Ascending aorta (tissue), 2 donors: ENCODE measurements at regions of chr5 and their contacts with region 1.

Region 1: DNA sequence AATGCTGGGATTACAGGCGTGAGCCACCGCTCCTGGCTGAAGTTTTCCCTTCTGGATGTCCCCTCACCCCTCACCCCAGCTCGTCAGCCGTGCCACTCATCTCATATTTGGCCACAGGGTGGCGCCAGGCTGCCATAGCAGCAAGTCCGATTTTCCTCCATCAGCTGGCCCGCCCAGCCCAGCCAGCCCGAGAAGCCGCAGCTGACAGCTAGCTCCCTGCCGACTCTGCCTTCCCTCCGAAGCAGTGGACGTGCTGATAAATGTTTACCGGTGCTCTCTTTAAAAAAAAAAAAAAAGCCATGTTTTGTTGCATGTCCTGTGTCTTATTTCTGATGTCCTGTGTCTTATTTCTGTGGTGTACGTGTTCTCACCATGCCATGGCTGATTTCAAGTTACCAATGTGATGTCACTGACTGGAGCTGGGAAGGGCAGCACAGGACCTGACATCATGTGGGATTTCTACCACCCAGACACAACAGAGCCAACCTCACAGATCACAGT is 58.3 kb downstream of the PFDN1 start:
- DNase-seq: peak; percentile 58 to 94
- H3K4me3 ChIP-seq: no peak overlapping the region
- H3K27ac ChIP-seq: no peak overlapping the region
- H3K4me1 ChIP-seq: peaks cover 10 to 24% of the 10 kb centered on the region in 2 donors
- H3K27me3 ChIP-seq: no peaks in the 10 kb centered on the region
- CTCF ChIP-seq: peak; percentile 89 to 93 (median 90)

Region 2: DNA sequence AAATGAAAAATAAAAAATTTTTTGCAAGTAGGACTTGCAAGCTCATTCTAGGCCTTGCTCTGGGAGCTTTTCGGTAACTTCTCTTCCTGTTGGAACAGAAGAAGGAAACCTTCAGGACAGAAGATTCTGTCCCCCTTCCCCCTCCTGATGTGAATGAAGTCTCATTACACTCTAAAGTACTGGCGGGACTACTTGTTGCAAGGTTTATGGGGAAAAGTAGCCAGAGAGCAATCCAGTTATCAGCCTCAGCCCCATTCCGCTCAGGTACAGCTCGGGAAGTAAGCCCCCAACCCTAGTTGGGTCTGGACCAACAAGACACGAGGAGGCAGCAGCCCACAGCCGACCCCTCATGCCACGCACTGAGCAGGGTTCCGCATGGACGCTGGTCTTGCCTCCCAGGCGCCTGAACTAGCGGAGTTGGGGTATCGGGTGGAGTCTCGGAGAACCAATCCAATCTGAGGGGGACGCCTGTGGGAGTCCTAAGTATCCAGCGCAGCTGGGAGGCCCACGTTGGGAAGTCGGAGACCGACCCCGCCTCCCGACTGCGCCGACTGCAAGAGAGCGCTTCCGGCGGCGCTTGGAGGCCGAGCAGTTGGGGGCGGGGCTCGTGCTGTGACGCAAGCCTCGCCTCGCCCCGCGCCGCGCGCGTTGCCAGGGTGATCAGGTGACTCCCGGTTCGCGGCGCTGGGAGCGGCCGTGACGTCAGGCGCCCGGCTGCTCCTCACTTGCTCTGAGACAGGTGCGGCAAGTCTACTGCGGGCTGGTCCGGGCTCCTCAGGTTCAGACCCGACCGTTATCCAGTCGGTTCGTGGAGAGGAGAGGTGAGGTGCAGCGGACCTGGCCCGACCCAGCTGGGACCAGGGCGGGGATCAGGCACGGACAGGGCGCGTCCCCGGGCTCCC is 69.9 kb before region 1 on chr5 and contains the start of gene CYSTM1:
- intact Hi-C with region 1: loop called (anchors 5 kb)
- DNase-seq: peak; percentile 86 to 98
- H3K4me3 ChIP-seq: peak within 1 kb of the TSS; percentile 93
- H3K27ac ChIP-seq: peak within 1 kb of the TSS; percentile 96 to 98
- H3K4me1 ChIP-seq: peaks cover 4 to 28% of the 10 kb centered on the region in 2 donors
- H3K27me3 ChIP-seq: no peaks in the 10 kb centered on the region
- CTCF ChIP-seq: peak in 1 of 3 experiments; percentile 3
- total RNA-seq, gene CYSTM1: 66.3 TPM

Region 3: GRCh38 chr5:140261403-140262171 is 17.0 kb after region 1 on chr5:
- intact Hi-C with region 1: loop called (anchors 2 kb)
- DNase-seq: peak; percentile 57 to 90
- H3K4me3 ChIP-seq: no peak overlapping the region
- H3K27ac ChIP-seq: peak overlapping the region; percentile 53 to 63
- H3K4me1 ChIP-seq: peaks cover 0 to 5% of the 10 kb centered on the region in 2 donors
- H3K27me3 ChIP-seq: no peaks in the 10 kb centered on the region
- CTCF ChIP-seq: peak in 1 of 3 experiments; percentile 13

Region 4: GRCh38 chr5:140295414-140295813 is 50.8 kb after region 1 on chr5:
- intact Hi-C with region 1: loop called (anchors 5 kb)
- DNase-seq: peak in 1 of 2 donors; percentile 84
- H3K4me3 ChIP-seq: no peak overlapping the region
- H3K27ac ChIP-seq: peak overlapping the region; percentile 52 to 74
- H3K4me1 ChIP-seq: peaks cover 0 to 48% of the 10 kb centered on the region in 2 donors
- H3K27me3 ChIP-seq: no peaks in the 10 kb centered on the region
- CTCF ChIP-seq: no peak

Region 5: GRCh38 chr5:140351609-140352334 is 107.2 kb after region 1 on chr5:
- intact Hi-C with region 1: loop called (anchors 1 kb)
- DNase-seq: no peak
- H3K4me3 ChIP-seq: no peak overlapping the region
- H3K27ac ChIP-seq: no peak overlapping the region
- H3K4me1 ChIP-seq: peaks cover 0 to 4% of the 10 kb centered on the region in 2 donors
- H3K27me3 ChIP-seq: no peaks in the 10 kb centered on the region
- CTCF ChIP-seq: peak; percentile 86 to 90 (median 86)

Region 6: DNA sequence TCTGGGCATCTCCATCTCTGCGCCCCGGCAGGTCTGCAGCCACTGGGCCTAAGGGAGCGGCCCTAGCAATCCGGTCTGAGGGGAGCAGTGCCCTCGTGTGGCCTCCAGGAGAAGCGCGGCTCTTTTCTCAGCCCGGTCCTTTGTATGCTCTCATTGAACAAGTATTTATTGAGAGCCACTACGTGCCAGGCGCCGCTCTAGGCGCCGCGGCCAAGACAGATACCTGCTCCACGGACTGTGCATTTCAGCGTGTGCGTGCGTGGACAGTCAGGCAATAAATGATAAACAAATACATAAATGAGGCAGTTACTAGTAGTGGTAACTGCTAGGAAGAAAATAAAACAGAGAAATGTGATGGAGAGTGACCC is 113.1 kb after region 1 on chr5:
- intact Hi-C with region 1: loop called (anchors 2 kb)
- DNase-seq: peak; percentile 56 to 94
- H3K4me3 ChIP-seq: peak overlapping the region; percentile 35 to 40
- H3K27ac ChIP-seq: no peak overlapping the region
- H3K4me1 ChIP-seq: peaks cover 0 to 4% of the 10 kb centered on the region in 2 donors
- H3K27me3 ChIP-seq: no peaks in the 10 kb centered on the region
- CTCF ChIP-seq: peak; percentile 86 to 93 (median 91)

Region 7: GRCh38 chr5:140647042-140647341 is 402.4 kb after region 1 on chr5:
- intact Hi-C with region 1: loop called (anchors 10 kb)
- DNase-seq: peak in 1 of 2 donors; percentile 61
- H3K4me3 ChIP-seq: peak overlapping the region; percentile 88 to 90
- H3K27ac ChIP-seq: peak overlapping the region; percentile 79 to 83
- H3K4me1 ChIP-seq: peaks cover 12 to 14% of the 10 kb centered on the region in 2 donors
- H3K27me3 ChIP-seq: no peaks in the 10 kb centered on the region
- CTCF ChIP-seq: no peak